ENCODE measurements at regions of chr16 and their contacts with region 1.

Region 1: DNA sequence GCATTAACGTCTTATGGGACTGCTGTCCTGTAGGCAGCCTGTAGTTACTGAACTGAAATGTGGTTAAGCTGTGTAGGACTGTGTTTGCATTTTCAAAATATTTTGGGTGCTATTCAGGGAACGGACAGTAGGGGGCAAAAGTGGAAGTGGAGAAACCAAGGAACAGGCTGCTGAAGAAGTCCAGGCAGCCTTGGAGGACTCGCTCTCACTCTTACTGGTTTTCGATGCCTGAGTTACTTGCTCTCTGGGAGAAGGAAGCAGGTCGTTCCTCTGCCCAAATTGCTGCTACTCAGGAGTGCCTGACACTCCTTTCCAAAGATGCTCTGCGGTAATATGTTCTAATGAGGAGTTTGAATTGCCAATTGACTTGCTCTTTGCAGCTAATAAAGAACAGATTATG is 64.5 kb upstream of the RBFOX1 start:
- DNase-seq: peak in 1 of 5 donors; percentile 19
- ATAC-seq: peak; percentile 34 to 70 (median 42)
- H3K4me3 ChIP-seq: no peak overlapping the region
- H3K27ac ChIP-seq: no peak overlapping the region
- H3K4me1 ChIP-seq: no peaks in the 10 kb centered on the region
- H3K27me3 ChIP-seq: no peaks in the 10 kb centered on the region
- CTCF ChIP-seq: peak; percentile 51 to 73 (median 60)
- POLR2A ChIP-seq: no peak

Region 2: DNA sequence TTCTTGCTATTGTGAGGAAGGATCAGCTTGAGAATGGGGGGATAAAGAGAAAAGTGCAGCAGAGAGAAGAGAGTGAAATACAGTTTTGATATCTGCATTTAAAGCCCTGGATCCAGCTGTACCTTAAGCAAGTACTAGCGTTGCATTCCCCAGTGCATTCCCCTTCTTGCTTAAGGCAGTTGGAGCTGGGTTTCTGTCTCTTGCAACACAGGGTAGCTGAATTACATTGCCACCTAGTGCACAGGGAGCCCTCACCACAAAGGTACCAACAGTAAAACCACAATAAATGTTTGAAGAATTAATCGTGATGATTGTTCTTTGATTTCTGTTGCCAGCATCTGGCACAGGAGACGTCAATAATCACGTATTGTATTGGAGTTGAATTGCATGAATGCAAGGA is 653.2 kb after region 1 on chr16:
- intact Hi-C with region 1: loop called in 1 of 10 experiments (anchors 10 kb)
- DNase-seq: no peak
- ATAC-seq: peak in 1 of 4 donors; percentile 32
- H3K4me3 ChIP-seq: no peak overlapping the region
- H3K27ac ChIP-seq: no peak overlapping the region
- H3K4me1 ChIP-seq: no peaks in the 10 kb centered on the region
- H3K27me3 ChIP-seq: no peaks in the 10 kb centered on the region
- CTCF ChIP-seq: peak in 3 of 12 donors; percentile 8 to 9 (median 8)
- POLR2A ChIP-seq: no peak